ENCODE measurements at regions of chr4 and their contacts with region 1.

Region 1: DNA sequence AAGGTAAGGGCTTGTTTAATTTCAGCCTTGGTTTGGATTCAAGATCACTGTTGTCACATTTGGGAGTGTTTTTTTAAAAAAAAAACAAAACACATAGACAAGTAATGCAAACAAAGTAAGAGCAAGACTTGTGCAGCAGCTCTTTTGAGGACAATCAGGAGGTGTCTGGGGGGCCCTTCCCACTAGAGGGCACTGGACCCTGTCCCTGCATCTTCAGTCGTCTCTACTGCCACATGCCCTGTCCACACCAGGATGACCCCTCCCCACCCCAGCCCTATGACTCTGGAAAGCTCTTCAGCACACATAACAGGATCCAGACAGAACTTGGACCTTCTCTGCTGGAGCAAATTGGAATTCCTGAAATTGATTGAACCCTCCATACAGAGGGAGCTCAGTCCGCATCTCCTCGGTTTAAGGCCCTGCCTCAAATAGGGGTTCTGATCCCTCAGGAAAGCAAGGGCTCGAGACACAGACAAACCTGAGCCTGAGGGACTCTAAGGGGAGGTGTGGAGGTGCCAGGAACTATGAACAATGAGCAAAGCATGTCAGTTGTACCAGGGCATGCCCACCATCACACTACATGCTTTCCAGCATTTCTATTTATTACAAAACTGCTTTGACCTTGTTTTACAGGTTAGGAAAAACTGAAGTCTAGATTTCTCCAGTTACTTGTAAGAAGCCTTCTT is 70.9 kb downstream of the USP46 start:
- DNase-seq: peak; percentile 64
- ATAC-seq: peak; percentile 88
- H3K4me3 Mint-ChIP-seq: no peak overlapping the region
- H3K27ac Mint-ChIP-seq: no peak overlapping the region
- H3K4me1 Mint-ChIP-seq: peaks cover 25% of the 10 kb centered on the region
- H3K27me3 Mint-ChIP-seq: no peaks in the 10 kb centered on the region
- CTCF ChIP-seq: peak; percentile 45; the same call in 1 of the 2 replicates

Region 2: DNA sequence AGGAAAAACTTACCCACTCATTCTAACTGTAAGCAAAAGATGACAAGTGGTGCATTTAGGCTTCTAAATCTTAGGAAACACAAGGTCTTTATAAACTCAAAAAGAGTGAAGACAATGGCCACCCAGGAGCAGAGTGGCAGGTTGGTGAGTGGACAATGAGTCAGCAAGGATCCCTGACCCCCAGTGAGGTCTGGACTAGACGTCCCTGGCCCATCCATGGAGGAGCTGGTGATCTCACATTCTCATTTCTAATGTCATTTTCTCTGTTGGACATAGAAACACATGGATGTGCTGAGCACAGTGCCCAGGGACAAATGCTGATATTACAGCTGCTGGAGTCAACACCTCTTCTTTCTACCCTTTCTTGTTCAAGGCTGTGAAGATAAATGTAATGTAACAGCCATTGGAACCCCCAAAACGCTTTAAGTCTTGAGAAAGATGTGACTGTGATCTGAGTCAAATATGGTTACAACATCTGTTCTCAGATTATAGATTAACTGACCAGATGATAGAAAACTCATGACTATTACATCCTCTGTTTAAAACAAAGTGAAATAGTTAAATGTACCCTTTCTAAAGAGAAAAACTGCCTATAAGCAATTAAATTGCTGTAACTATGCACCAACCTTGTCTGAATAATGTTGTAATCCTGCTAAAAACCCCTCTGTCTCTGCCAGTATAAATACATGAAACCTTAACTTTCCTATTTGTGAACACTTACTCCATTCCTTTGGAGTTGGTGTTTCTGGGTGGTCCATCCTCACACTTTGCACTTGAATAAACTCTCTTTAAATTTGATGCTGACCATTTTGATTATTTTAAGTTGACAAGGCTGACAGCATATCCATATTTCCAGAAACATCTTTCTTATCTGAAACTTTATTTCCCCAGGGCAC is 21.9 kb before region 1 on chr4:
- CTCF ChIA-PET with region 1: interaction called, 15 read pairs
- POLR2A ChIA-PET with region 1: no interaction called
- DNase-seq: no peak
- ATAC-seq: no peak
- H3K4me3 Mint-ChIP-seq: no peak overlapping the region
- H3K27ac Mint-ChIP-seq: no peak overlapping the region
- H3K4me1 Mint-ChIP-seq: peaks cover 40% of the 10 kb centered on the region
- H3K27me3 Mint-ChIP-seq: peaks cover 3% of the 10 kb centered on the region; the same call in 1 of the 2 replicates
- CTCF ChIP-seq: no peak

Region 3: DNA sequence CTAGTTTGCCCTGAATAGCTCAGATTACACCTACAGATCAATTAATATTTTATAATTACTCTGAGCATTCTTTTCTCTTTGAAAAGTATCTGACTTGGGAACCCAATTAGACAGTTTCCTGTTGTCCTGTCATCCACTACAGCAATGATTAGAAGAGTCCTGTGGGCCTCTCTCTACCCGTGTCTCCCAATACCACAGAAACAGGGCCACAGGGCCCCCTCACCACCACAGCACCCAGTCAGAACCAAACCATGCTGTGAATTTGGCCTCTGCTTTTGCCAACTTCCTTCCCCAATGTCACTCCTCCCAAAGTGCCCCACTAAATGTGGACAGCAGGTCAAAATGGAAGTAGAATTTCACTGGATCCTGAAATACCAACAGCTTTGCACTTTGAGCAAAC is 60.6 kb after region 1 on chr4:
- CTCF ChIA-PET with region 1: interaction called, 13 read pairs
- POLR2A ChIA-PET with region 1: no interaction called
- DNase-seq: no peak
- ATAC-seq: no peak
- H3K4me3 Mint-ChIP-seq: no peak overlapping the region
- H3K27ac Mint-ChIP-seq: no peak overlapping the region
- H3K4me1 Mint-ChIP-seq: peaks cover 82% of the 10 kb centered on the region
- H3K27me3 Mint-ChIP-seq: no peaks in the 10 kb centered on the region
- CTCF ChIP-seq: no peak

Region 4: GRCh38 chr4:52659001-52659721 is 70.9 kb after region 1 on chr4 and contains the start of gene USP46:
- CTCF ChIA-PET with region 1: interaction called, 17 read pairs
- POLR2A ChIA-PET with region 1: no interaction called
- DNase-seq: peak; percentile 68
- ATAC-seq: peak; percentile 62
- H3K4me3 Mint-ChIP-seq: peak within 1 kb of the TSS; percentile 78
- H3K27ac Mint-ChIP-seq: peak within 1 kb of the TSS; percentile 93; the same call in 1 of the 2 replicates
- H3K4me1 Mint-ChIP-seq: peaks cover 51% of the 10 kb centered on the region
- H3K27me3 Mint-ChIP-seq: peaks cover 10% of the 10 kb centered on the region
- CTCF ChIP-seq: no peak
- total RNA-seq, gene USP46: 48.1 to 54.1 TPM (median 49.5 TPM) in 3 replicates

Region 5: DNA sequence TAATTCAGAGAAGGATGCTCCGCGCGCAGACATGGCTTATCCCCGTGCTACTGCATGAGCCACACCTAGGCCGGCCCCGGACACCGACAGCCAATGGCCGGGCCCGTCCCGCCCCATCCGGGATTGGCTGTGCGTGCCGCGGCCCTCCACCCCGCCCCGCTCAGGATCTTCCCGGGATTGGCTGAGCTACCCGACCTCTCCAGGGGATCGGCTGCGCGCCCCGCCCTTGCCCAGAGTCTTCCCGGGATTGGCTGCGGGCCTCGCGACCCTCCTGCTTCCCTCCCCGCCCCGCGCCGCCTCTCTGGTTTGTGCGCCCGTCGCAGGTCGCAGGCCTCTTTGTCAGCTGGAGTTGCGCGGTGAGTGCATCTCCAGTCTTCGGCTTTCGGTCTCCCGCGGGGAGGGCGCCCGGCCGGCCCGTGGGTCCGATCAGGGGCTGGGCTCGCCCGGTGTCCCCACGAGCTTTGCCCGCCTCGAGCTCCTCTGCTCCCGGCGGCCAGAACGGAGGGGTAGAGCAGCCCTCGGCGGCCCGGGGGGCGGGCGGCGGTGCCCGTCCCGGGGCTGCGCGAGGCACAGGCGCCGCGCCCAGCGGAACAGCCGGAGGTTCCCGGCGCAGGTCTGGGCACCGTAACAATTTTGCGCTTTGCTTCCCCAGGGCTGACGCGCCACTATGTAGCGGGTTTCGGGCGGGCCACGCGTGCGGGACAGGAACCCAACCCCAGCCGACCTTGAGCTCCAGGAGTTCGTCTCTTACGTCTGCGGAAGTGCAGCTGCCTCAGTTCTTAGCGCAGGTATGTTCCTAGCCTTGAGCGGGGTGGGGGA is 124.1 kb after region 1 on chr4:
- CTCF ChIA-PET with region 1: interaction called, 10 read pairs
- POLR2A ChIA-PET with region 1: interaction called, 4 read pairs
- DNase-seq: peak; percentile 99
- ATAC-seq: peak; percentile 95
- H3K4me3 Mint-ChIP-seq: peak overlapping the region; percentile 88
- H3K27ac Mint-ChIP-seq: peak overlapping the region; percentile 96
- H3K4me1 Mint-ChIP-seq: peaks cover 44% of the 10 kb centered on the region
- H3K27me3 Mint-ChIP-seq: no peaks in the 10 kb centered on the region
- CTCF ChIP-seq: no peak

Measured in WTC11 (cell line).